ENCODE measurements at regions of chr12 and their contacts with region 1.

Region 1: DNA sequence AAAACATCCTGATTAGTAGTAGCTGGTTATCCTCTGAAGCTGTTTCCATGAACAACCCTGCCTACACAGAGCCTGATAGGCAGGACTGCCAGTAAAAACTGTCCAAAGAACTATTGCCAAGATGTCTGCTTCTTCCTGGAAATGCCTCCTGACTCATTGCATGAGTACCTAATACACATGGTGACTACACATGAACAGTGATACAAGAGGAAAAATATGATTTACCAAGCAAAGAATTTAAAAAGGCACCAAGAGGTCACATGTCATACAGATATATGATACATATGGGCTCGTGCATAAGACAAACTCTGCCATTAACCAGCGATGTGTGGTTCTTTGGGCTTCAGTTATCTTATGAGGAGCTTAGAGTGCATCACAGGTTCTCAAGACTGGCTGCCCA is 552.3 kb downstream of the SLC16A7 start:
- DNase-seq: no peak
- H3K4me3 Mint-ChIP-seq: no peak overlapping the region
- H3K27ac Mint-ChIP-seq: peak overlapping the region; percentile 39
- H3K4me1 Mint-ChIP-seq: peaks cover 20% of the 10 kb centered on the region
- H3K27me3 Mint-ChIP-seq: no peaks in the 10 kb centered on the region
- CTCF ChIP-seq: no peak

Region 2: GRCh38 chr12:60172266-60172665 is 24.2 kb after region 1 on chr12:
- CTCF ChIA-PET with region 1: no interaction called
- intact Hi-C with region 1: loop called (anchors 2 kb)
- DNase-seq: no peak
- H3K4me3 Mint-ChIP-seq: peak overlapping the region; percentile 7
- H3K27ac Mint-ChIP-seq: peak overlapping the region; percentile 89
- H3K4me1 Mint-ChIP-seq: peaks cover 32% of the 10 kb centered on the region
- H3K27me3 Mint-ChIP-seq: no peaks in the 10 kb centered on the region
- CTCF ChIP-seq: no peak

Region 3: GRCh38 chr12:60184107-60184506 is 36.0 kb after region 1 on chr12:
- CTCF ChIA-PET with region 1: no interaction called
- intact Hi-C with region 1: no loop called
- DNase-seq: no peak
- H3K4me3 Mint-ChIP-seq: no peak overlapping the region
- H3K27ac Mint-ChIP-seq: no peak overlapping the region
- H3K4me1 Mint-ChIP-seq: peaks cover 5% of the 10 kb centered on the region
- H3K27me3 Mint-ChIP-seq: no peaks in the 10 kb centered on the region
- CTCF ChIP-seq: no peak